Activated CD4-positive, alpha-beta T cell treated with anti-CD3 and anti-CD28 coated beads for 36 hours (primary cell): ENCODE measurements at regions of chr14 and their contacts with region 1.

Region 1: DNA sequence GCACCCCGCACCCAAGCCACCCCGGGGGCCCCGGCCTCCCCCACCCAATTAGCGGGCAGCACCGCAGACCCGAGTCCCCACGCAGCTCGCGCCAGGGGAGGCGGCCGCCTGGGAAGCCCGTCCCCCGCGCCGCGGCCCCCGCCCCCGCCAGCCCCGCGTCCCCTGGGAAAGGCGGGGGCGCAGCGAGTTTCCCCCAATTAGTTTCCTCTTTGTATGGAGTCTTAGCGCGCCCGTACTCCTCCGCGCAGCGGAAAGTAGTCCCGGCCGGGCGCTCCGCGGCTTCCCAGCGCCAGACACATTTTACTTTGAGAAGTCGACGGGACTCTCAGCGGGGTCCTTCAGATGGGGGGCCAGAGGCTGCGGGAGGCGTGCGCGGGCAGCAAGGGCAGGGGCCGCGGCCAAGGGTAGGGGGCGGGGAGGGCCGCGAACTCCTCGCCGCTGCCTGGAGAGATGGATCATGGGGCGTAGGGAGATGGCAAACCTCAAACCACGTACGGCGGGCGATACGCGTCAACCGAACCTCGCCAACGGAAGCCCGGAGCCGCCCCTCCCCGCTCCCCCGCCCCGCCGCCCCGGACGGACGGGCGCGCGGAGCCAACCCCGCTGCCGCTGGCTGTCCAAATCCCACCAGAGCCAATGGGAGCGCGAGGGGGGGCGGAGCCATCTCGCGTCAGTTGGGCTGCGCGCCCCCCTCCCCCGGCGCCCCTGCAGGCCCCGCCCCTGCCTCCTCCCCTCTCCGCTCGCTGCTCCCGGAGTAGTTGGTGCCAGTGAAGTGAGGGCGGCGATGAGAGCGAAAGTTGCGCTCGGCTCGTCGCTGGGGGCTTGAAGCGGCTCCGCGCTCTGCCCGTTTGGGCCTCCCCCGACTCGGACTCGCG is at the start of gene RCOR1:
- DNase-seq: peak; percentile 99
- ATAC-seq: peak; percentile 92
- H3K4me3 Mint-ChIP-seq: peak within 1 kb of the TSS; percentile 93
- H3K27ac Mint-ChIP-seq: peak within 1 kb of the TSS; percentile 92
- H3K4me1 Mint-ChIP-seq: peaks cover 33% of the 10 kb centered on the region
- H3K27me3 Mint-ChIP-seq: no peaks in the 10 kb centered on the region
- total RNA-seq, gene RCOR1: 14.8 to 15.3 TPM

Region 2: DNA sequence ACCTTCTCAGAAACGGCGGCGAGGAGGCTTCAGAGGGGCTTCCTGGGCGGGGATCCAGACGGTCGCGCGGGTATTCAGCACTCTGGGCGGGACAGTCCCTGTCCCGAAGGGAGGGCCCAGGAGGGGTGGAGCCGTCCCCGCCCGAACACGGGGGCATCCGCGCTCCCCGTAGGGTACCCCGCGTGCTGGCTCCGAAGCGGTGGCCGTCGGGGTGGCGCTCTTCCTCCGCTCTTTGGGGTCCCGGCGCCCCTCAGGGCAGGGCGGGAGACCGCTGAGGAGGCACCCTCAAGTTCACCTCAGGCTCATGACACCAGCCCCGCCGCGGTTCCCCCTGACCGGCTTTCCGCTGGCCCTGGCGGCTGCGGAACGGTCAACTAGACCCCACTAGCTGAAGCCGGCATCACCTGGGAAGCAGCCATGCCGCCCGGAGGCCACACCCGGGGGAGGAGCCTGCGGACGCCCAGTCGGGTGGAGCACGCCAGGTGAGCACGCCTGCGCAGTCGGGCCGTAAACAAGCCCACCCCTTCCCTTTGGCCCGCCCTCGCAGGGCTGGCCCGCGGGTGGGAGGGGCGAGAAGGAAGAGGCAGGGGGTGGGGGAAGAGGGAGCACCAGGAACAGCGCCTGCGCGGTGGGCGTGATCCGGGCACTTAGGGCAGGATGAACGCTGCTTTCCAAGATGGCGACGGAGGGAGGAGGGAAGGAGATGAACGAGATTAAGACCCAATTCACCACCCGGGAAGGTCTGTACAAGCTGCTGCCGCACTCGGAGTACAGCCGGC is 452.7 kb before region 1 on chr14 and contains the start of gene WDR20:
- CTCF ChIA-PET with region 1: interaction called, 3 read pairs
- POLR2A ChIA-PET with region 1: no interaction called
- intact Hi-C with region 1: loop called in 1 of 2 experiments (anchors 1 kb)
- DNase-seq: peak; percentile 100
- ATAC-seq: peak; percentile 94
- H3K4me3 Mint-ChIP-seq: peak within 1 kb of the TSS; percentile 96
- H3K27ac Mint-ChIP-seq: peak within 1 kb of the TSS; percentile 94
- H3K4me1 Mint-ChIP-seq: peaks cover 21% of the 10 kb centered on the region
- H3K27me3 Mint-ChIP-seq: no peaks in the 10 kb centered on the region
- total RNA-seq, gene WDR20: 18.2 to 24.8 TPM

Region 3: DNA sequence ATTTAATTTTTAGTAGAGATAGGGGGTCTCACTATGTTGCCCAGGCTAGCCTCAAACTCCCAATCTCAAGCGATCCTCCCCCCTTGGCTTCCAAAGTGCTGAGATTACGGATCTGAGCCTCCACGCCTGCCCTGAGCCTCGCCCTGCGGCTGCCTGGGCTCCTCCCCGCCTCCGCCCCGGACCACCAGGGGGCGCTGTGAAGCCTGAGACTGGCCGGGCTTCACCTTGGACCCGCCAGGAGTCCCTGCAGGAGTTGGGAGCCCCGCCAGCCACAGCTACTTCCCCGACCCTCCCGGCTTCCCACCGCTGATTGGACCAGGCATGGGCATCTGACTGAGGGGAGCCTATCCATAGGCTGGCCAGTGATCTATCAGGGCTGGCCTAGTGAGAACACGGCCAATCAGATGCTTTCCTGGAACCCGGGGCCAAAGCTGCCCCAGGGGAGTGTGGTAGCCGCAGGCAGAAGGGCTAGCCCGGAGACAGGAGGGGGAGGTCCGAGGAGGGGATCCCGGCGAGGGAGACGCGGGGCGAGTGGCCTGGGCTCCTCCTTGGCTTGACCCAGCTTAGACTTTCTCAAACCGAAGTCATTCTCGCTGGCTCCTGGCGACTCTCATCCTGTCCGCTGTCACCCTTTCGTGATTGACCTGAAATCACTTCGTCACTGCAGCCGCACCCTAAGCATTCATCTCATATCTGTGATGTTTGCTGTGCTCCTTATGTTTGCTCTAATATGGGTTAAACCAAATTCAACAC is 67.5 kb before region 1 on chr14:
- CTCF ChIA-PET with region 1: interaction called, 19 read pairs
- POLR2A ChIA-PET with region 1: no interaction called
- intact Hi-C with region 1: loop called (anchors 1 to 5 kb)
- DNase-seq: peak; percentile 98
- ATAC-seq: peak; percentile 98
- H3K4me3 Mint-ChIP-seq: peak overlapping the region; percentile 68
- H3K27ac Mint-ChIP-seq: peak overlapping the region; percentile 32
- H3K4me1 Mint-ChIP-seq: peaks cover 35% of the 10 kb centered on the region
- H3K27me3 Mint-ChIP-seq: no peaks in the 10 kb centered on the region

Region 4: DNA sequence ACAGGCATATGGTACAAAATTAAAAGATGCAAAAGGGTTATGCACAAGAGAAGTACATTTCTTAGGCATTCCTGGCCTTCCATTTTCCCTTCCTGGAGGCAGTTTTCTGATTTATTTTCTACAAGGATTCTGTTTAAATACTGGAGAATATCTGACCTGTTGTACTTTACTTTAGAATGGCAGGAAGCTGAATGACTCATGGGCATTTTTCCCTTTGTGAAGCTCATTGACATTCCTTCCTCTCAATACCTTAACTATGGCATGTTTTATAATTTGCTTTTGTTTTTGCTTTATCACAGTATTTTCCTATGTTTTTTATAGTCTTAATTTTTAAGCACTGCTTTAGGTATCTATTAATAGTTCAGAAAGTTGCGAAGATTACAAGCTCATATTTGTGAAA is 63.0 kb after region 1 on chr14:
- CTCF ChIA-PET with region 1: interaction called, 10 read pairs
- POLR2A ChIA-PET with region 1: no interaction called
- intact Hi-C with region 1: no loop called
- DNase-seq: no peak
- ATAC-seq: no peak
- H3K4me3 Mint-ChIP-seq: no peak overlapping the region
- H3K27ac Mint-ChIP-seq: no peak overlapping the region
- H3K4me1 Mint-ChIP-seq: peaks cover 36% of the 10 kb centered on the region
- H3K27me3 Mint-ChIP-seq: no peaks in the 10 kb centered on the region

Region 5: DNA sequence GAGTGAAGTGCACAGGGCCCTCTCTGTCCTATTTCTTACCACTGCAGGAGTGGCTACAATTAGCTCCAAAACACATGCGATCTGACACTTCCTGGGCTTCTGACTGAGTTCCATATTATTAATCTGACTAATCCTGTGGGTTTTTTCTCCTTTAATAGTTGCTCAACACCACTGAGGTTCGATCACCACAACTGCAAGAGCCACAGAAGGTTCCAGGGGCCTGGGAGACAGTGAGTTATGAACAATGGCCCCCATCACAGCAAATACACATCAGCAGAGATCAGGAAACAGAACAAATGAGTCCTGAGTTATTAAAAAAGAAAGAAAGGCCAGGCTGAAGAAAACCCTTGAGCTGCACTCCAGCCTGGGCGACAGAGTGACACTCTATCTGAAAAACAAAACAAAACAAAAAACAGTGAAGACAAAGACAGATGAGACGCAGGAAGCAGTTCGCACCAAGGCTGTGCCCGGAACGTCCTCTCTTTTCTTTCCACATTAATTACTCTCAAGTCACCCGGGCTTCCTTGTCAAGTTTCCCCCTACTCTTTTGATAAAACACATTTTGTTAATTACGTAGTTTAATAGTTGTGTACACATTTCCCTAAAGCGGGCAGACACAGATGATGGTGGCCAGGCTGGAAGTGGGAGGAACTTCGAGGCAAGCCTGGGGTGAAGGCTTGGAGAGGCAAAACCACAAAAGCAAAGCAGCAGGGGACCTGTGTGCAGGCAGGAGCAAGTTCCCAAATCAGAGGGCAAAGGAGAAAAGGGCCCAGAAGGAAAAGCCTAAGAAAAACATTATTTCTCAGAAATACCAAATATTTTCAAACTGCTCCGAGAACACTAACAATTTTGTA is 422.6 kb after region 1 on chr14:
- CTCF ChIA-PET with region 1: no interaction called
- POLR2A ChIA-PET with region 1: no interaction called
- intact Hi-C with region 1: no loop called
- DNase-seq: no peak
- ATAC-seq: peak; percentile 44
- H3K4me3 Mint-ChIP-seq: no peak overlapping the region
- H3K27ac Mint-ChIP-seq: peak overlapping the region; percentile 1
- H3K4me1 Mint-ChIP-seq: peaks cover 8% of the 10 kb centered on the region
- H3K27me3 Mint-ChIP-seq: no peaks in the 10 kb centered on the region

Region 6: GRCh38 chr14:103078093-103078749 is 486.1 kb after region 1 on chr14:
- CTCF ChIA-PET with region 1: no interaction called
- POLR2A ChIA-PET with region 1: no interaction called
- intact Hi-C with region 1: loop called in 1 of 2 experiments (anchors 5 kb)
- DNase-seq: peak; percentile 89
- ATAC-seq: peak; percentile 85
- H3K4me3 Mint-ChIP-seq: no peak overlapping the region
- H3K27ac Mint-ChIP-seq: no peak overlapping the region
- H3K4me1 Mint-ChIP-seq: no peaks in the 10 kb centered on the region
- H3K27me3 Mint-ChIP-seq: peaks cover 4% of the 10 kb centered on the region

Region 7: GRCh38 chr14:103715052-103716000 is 1123.2 kb after region 1 on chr14 and contains the starts of genes XRCC3 and ZFYVE21:
- CTCF ChIA-PET with region 1: no interaction called
- POLR2A ChIA-PET with region 1: no interaction called
- intact Hi-C with region 1: loop called in 1 of 2 experiments (anchors 10 kb)
- DNase-seq: peak; percentile 100
- ATAC-seq: peak; percentile 96
- H3K4me3 Mint-ChIP-seq: peak within 1 kb of the TSS; percentile 81
- H3K27ac Mint-ChIP-seq: peak within 1 kb of the TSS; percentile 60
- H3K4me1 Mint-ChIP-seq: peaks cover 49% of the 10 kb centered on the region
- H3K27me3 Mint-ChIP-seq: no peaks in the 10 kb centered on the region
- total RNA-seq, gene XRCC3: 43.7 to 46.9 TPM
- total RNA-seq, gene ZFYVE21: 10.1 to 12.7 TPM